ENCODE measurements at regions of chr1 and their contacts with region 1.

Region 1: GRCh38 chr1:111139956-111140679 is at the starts of genes CEPT1 and DRAM2:
- DNase-seq: peak; percentile 80 to 96 (median 88)
- ATAC-seq: peak; percentile 77
- H3K4me3 ChIP-seq: peak within 1 kb of the TSS; percentile 94
- H3K4me3 Mint-ChIP-seq: peak within 1 kb of the TSS; percentile 100
- H3K27ac ChIP-seq: peak within 1 kb of the TSS; percentile 80 to 91
- H3K27ac Mint-ChIP-seq: peak within 1 kb of the TSS; percentile 90
- H3K4me1 ChIP-seq: peaks cover 17% of the 10 kb centered on the region
- H3K4me1 Mint-ChIP-seq: peaks cover 65% of the 10 kb centered on the region
- H3K27me3 ChIP-seq: no peaks in the 10 kb centered on the region
- H3K27me3 Mint-ChIP-seq: no peaks in the 10 kb centered on the region
- CTCF ChIP-seq: no peak
- total RNA-seq, gene CEPT1: 25.0 to 27.2 TPM
- total RNA-seq, gene DRAM2: 35.7 to 38.7 TPM

Region 2: GRCh38 chr1:110407260-110408210 is 732.6 kb before region 1 on chr1 and contains the start of gene LAMTOR5:
- CTCF ChIA-PET with region 1: no interaction called
- POLR2A ChIA-PET with region 1: no interaction called
- intact Hi-C with region 1: loop called in 1 of 2 experiments (anchors 10 kb)
- DNase-seq: peak; percentile 79 to 95 (median 86)
- ATAC-seq: peak; percentile 94
- H3K4me3 ChIP-seq: peak within 1 kb of the TSS; percentile 90
- H3K4me3 Mint-ChIP-seq: peak within 1 kb of the TSS; percentile 99
- H3K27ac ChIP-seq: peak within 1 kb of the TSS; percentile 84 to 88
- H3K27ac Mint-ChIP-seq: peak within 1 kb of the TSS; percentile 99
- H3K4me1 ChIP-seq: peaks cover 26% of the 10 kb centered on the region
- H3K4me1 Mint-ChIP-seq: peaks cover 38% of the 10 kb centered on the region
- H3K27me3 ChIP-seq: no peaks in the 10 kb centered on the region
- H3K27me3 Mint-ChIP-seq: no peaks in the 10 kb centered on the region
- CTCF ChIP-seq: no peak
- total RNA-seq, gene LAMTOR5: 105 to 108 TPM

Region 3: GRCh38 chr1:111176678-111177077 is 36.6 kb after region 1 on chr1:
- CTCF ChIA-PET with region 1: no interaction called
- POLR2A ChIA-PET with region 1: interaction called, 3 read pairs
- intact Hi-C with region 1: loop called in 1 of 2 experiments (anchors 5 kb)
- DNase-seq: no peak
- ATAC-seq: no peak
- H3K4me3 ChIP-seq: no peak overlapping the region
- H3K4me3 Mint-ChIP-seq: no peak overlapping the region
- H3K27ac ChIP-seq: no peak overlapping the region
- H3K27ac Mint-ChIP-seq: peak overlapping the region; percentile 53
- H3K4me1 ChIP-seq: no peaks in the 10 kb centered on the region
- H3K4me1 Mint-ChIP-seq: peaks cover 86% of the 10 kb centered on the region
- H3K27me3 ChIP-seq: no peaks in the 10 kb centered on the region
- H3K27me3 Mint-ChIP-seq: no peaks in the 10 kb centered on the region
- CTCF ChIP-seq: no peak

Region 4: GRCh38 chr1:111203681-111204200 is 63.6 kb after region 1 on chr1:
- CTCF ChIA-PET with region 1: no interaction called
- POLR2A ChIA-PET with region 1: interaction called, 13 read pairs
- intact Hi-C with region 1: loop called in 1 of 2 experiments (anchors 5 kb)
- DNase-seq: peak; percentile 52 to 93 (median 84)
- ATAC-seq: peak; percentile 39
- H3K4me3 ChIP-seq: peak overlapping the region; percentile 79
- H3K4me3 Mint-ChIP-seq: peak overlapping the region; percentile 99
- H3K27ac ChIP-seq: peak overlapping the region; percentile 70 to 97
- H3K27ac Mint-ChIP-seq: peak overlapping the region; percentile 90
- H3K4me1 ChIP-seq: peaks cover 50% of the 10 kb centered on the region
- H3K4me1 Mint-ChIP-seq: peaks cover 83% of the 10 kb centered on the region
- H3K27me3 ChIP-seq: no peaks in the 10 kb centered on the region
- H3K27me3 Mint-ChIP-seq: no peaks in the 10 kb centered on the region
- CTCF ChIP-seq: no peak

Region 5: GRCh38 chr1:111334169-111334568 is 194.1 kb after region 1 on chr1:
- CTCF ChIA-PET with region 1: interaction called, 3 read pairs
- POLR2A ChIA-PET with region 1: interaction called, 3 read pairs
- intact Hi-C with region 1: loop called in 1 of 2 experiments (anchors 1 kb)
- DNase-seq: peak; percentile 37 to 85 (median 52)
- ATAC-seq: peak; percentile 95
- H3K4me3 ChIP-seq: no peak overlapping the region
- H3K4me3 Mint-ChIP-seq: no peak overlapping the region
- H3K27ac ChIP-seq: no peak overlapping the region
- H3K27ac Mint-ChIP-seq: no peak overlapping the region
- H3K4me1 ChIP-seq: peaks cover 8% of the 10 kb centered on the region
- H3K4me1 Mint-ChIP-seq: peaks cover 6% of the 10 kb centered on the region
- H3K27me3 ChIP-seq: no peaks in the 10 kb centered on the region
- H3K27me3 Mint-ChIP-seq: no peaks in the 10 kb centered on the region
- CTCF ChIP-seq: peak; percentile 81

Region 6: GRCh38 chr1:111448918-111449702 is 309.0 kb after region 1 on chr1 and contains the starts of genes ATP5PB and WDR77:
- CTCF ChIA-PET with region 1: interaction called, 3 read pairs
- POLR2A ChIA-PET with region 1: no interaction called
- intact Hi-C with region 1: loop called in 1 of 2 experiments (anchors 5 kb)
- DNase-seq: peak; percentile 73 to 99 (median 84)
- ATAC-seq: peak; percentile 95
- H3K4me3 ChIP-seq: peak within 1 kb of the TSS; percentile 75
- H3K4me3 Mint-ChIP-seq: peak within 1 kb of the TSS; percentile 97
- H3K27ac ChIP-seq: peak within 1 kb of the TSS; percentile 75 to 93
- H3K27ac Mint-ChIP-seq: peak within 1 kb of the TSS; percentile 97
- H3K4me1 ChIP-seq: peaks cover 44% of the 10 kb centered on the region
- H3K4me1 Mint-ChIP-seq: peaks cover 92% of the 10 kb centered on the region
- H3K27me3 ChIP-seq: no peaks in the 10 kb centered on the region
- H3K27me3 Mint-ChIP-seq: no peaks in the 10 kb centered on the region
- CTCF ChIP-seq: no peak
- total RNA-seq, gene ATP5PB: 47.3 to 51.5 TPM
- total RNA-seq, gene WDR77: 12.4 to 15.1 TPM